ENCODE measurements at regions of chr7 and their contacts with region 1.

Region 1: DNA sequence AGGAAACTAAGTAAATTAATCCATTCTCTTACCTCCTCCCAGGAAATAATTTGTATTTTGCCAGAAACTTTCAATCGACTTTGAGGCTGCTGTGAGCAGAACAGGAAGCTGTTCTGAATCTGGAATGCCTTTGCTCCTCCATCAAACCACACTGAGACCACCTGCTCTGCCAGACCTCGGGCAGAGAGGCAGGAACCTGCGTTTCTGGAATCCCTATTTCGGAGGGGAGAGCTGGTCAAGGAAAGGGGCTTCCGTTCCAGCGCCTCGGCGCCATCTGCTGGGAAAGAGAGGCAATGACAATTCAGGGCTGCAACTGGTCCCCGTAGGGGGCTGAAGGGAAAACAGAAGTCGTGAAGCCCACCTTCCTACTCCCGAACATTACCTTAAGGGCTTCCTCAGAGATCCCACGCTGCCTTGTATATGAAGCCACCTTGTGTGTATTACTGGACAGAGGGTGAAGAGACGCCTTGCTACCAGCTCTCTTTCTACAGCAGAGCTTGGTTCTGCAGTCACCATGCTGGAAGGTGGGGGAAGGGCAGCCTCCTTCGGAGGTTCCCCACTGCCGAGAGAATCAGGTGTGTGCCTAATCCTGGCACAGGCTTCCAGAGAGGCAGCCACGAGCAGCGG is 31.2 kb downstream of the ZNF467 start:
- DNase-seq: peak; percentile 62
- H3K4me3 Mint-ChIP-seq: peak overlapping the region; percentile 41
- H3K27ac Mint-ChIP-seq: no peak overlapping the region
- H3K4me1 Mint-ChIP-seq: peaks cover 11% of the 10 kb centered on the region
- H3K27me3 Mint-ChIP-seq: peaks cover 51% of the 10 kb centered on the region

Region 2: GRCh38 chr7:149768931-149769330 is 26.7 kb after region 1 on chr7:
- CTCF ChIA-PET with region 1: interaction called, 11 read pairs
- POLR2A ChIA-PET with region 1: no interaction called
- DNase-seq: no peak
- H3K4me3 Mint-ChIP-seq: no peak overlapping the region
- H3K27ac Mint-ChIP-seq: no peak overlapping the region
- H3K4me1 Mint-ChIP-seq: peaks cover 11% of the 10 kb centered on the region
- H3K27me3 Mint-ChIP-seq: peaks cover 6% of the 10 kb centered on the region

Measured in activated CD4-positive, alpha-beta T cell treated with anti-CD3 and anti-CD28 coated beads, Interleukin-2, amount 10 ng/mL, durations not matched to agents 7 days and 5 days (primary cell).